Left lung (tissue), 14 donors: ENCODE measurements at regions of chr20 and their contacts with region 1.

Region 1: DNA sequence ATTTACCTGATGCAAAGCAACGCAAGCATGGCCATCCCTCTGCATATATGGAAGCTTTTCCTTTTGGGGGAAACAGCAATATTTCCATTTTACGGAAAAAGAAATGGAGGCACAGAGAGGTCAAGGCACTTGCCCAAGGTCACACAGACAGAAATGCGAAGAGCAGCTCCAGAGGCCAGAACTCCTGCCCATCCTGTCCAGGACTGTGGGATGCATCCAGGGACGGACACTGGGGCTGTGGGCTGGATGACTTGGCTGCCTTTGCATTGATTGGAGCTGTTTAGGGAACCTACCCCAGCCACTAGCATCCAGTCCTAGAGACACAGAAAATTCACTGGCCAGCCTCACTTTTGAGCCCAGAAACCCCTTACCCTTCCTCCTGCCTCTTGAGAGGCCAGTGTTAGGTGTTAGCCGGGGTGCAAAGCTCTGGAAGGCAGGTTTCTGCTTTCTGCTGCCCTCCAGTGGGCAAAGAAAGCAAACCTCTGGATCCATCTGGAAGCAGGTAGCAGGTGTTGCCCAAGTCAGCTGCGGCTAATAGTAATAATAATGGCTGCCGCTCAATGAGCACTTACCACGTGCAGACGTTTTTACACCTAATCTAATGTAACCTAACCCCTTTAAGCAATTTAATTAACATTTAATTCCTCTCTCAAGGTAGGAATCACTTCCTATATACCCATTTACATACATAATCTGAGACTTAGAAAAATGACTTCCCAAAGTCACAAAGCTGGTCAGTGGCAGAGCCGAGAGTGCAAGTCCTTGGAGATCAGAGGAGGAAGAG is 31.7 kb upstream of the CCN5 start:
- DNase-seq: peak in 1 of 4 donors; percentile 64
- ATAC-seq: peak; percentile 71
- H3K4me3 ChIP-seq: no peak overlapping the region
- H3K27ac ChIP-seq: no peak overlapping the region
- H3K4me1 ChIP-seq: peaks cover 0 to 9% of the 10 kb centered on the region in 2 donors
- H3K27me3 ChIP-seq: no peaks in the 10 kb centered on the region
- CTCF ChIP-seq: peak; percentile 32 to 64

Region 2: DNA sequence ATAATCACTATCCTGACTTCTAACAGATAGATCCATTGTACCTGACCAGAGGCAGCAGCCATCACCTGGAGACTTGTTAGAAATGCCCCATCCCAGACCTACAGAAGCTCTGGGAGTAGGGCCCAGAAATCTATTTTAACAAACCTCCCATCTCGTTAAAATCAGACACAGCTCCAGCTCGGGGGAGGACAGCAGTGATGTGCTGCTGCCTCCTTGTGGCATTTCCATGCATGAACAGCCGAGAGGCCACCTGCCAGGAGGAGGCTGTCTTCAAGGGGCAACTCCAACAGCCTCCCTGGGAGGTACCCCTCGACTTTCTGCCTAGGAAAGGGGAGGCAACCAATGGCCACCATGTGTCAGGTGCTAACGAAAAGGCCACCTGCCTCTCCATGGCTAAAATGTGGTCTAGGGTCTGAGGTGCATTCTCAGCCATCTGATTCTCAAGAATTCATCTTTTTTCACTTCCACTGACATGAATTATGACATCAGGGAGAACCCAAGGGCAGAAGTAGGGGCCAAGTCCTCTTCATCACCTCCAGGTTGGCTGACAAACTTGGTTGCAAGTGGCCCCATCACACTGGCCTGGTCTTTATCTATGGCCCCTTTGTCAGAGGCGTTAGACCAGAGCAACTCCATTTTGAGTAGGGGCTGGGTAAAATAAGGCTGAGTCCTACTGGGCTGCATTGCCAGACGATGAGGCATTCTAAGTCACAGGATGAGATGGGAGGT is 50.0 kb after region 1 on chr20:
- intact Hi-C with region 1: loop called in 1 of 2 experiments (anchors 2 kb)
- DNase-seq: peak in 3 of 4 donors; percentile 58 to 83 (median 81)
- ATAC-seq: peak; percentile 67
- H3K4me3 ChIP-seq: no peak overlapping the region
- H3K27ac ChIP-seq: no peak overlapping the region
- H3K4me1 ChIP-seq: peaks cover 4 to 14% of the 10 kb centered on the region in 2 donors
- H3K27me3 ChIP-seq: no peaks in the 10 kb centered on the region
- CTCF ChIP-seq: peak; percentile 81 to 94

Region 3: DNA sequence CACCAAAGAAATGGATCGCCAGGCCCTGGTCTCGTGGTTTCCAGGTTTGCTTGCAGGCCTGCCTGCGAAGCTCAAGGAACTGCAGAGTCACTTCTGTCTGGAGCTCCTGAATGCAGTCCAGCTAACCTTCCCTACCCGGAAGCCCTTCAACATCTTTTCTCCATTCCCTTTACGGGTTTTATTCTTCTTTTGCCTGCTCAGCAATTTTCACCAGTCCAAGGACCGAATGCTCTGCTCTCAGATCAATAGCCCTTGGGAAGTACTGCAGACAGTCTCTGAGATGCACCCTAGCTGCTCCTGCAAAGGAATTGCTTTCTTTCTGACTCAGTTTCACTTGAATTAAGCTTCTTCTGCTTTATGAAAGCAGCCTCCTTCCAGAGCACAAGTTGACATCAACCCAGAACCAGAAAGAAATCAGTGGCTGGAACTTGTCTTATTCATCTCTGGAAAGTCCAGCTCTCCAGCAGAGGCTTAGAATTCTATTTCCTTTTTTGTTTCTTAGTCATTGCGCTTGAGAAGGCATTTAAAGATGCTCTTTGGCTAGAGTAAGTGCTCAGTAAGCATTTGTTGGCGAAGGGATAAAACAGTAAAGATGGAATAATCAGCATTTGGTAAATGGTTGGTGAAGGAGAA is 183.4 kb after region 1 on chr20:
- intact Hi-C with region 1: loop called in 1 of 2 experiments (anchors 5 kb)
- DNase-seq: no peak
- ATAC-seq: peak; percentile 19
- H3K4me3 ChIP-seq: no peak overlapping the region
- H3K27ac ChIP-seq: no peak overlapping the region
- H3K4me1 ChIP-seq: peaks cover 0 to 7% of the 10 kb centered on the region in 2 donors
- H3K27me3 ChIP-seq: no peaks in the 10 kb centered on the region
- CTCF ChIP-seq: no peak